IMR-90 (cell line): ENCODE measurements at regions of chr18 and their contacts with region 1.

Region 1: DNA sequence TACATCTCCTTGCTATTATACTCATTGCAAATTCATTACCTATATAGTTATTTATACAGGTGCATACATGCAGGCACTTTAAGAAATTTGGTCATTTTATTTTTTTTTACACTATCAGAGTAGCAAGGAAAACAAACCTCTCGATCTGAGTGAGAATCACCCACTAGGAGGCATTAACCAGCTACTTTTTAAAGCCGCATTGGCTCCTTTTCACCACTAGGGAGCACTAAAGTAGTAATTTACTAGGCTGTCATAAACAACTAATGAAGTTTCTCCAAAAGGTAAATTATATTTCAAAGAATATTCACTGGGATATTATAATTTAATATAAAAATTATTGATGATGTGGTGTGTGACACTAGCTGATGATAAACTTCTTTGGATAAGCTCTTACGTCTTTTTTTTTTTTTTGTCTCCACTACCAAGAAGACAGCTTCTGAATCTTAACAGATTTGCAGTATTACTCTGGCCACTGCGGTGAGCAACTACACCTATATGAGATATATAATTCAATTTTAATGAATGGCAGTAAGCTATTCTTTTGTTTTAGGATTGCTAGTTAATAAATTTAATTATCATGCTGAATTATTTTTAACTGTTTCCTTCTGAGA is 101.9 kb downstream of the NOL4 start:
- DNase-seq: peak; percentile 53
- ATAC-seq: peak; percentile 69; the same call in 1 of the 2 replicates
- H3K4me3 ChIP-seq: no peak overlapping the region
- H3K27ac ChIP-seq: no peak overlapping the region
- H3K4me1 ChIP-seq: no peaks in the 10 kb centered on the region
- H3K27me3 ChIP-seq: no peaks in the 10 kb centered on the region
- CTCF ChIP-seq: peak; percentile 98
- POLR2A ChIP-seq: no peak
- RAD21 ChIP-seq: peak; percentile 62

Region 2: GRCh38 chr18:34108206-34108605 is 14.6 kb before region 1 on chr18:
- CTCF ChIA-PET with region 1: interaction called, 12 read pairs
- POLR2A ChIA-PET with region 1: no interaction called
- dilution Hi-C with region 1: no loop called
- in situ Hi-C with region 1: no loop called
- intact Hi-C with region 1: no loop called
- DNase-seq: no peak
- ATAC-seq: no peak
- H3K4me3 ChIP-seq: no peak overlapping the region
- H3K27ac ChIP-seq: no peak overlapping the region
- H3K4me1 ChIP-seq: no peaks in the 10 kb centered on the region
- H3K27me3 ChIP-seq: no peaks in the 10 kb centered on the region
- CTCF ChIP-seq: no peak
- POLR2A ChIP-seq: no peak
- RAD21 ChIP-seq: no peak

Region 3: GRCh38 chr18:34322365-34323289 is 199.8 kb after region 1 on chr18:
- CTCF ChIA-PET with region 1: interaction called, 22 read pairs
- POLR2A ChIA-PET with region 1: no interaction called
- dilution Hi-C with region 1: no loop called
- in situ Hi-C with region 1: loop called (anchors 10 kb)
- intact Hi-C with region 1: loop called (anchors 1 kb)
- DNase-seq: peak; percentile 57
- ATAC-seq: 0 out of 2 replicates have a peak, but pooled peaks have one; percentile 46
- H3K4me3 ChIP-seq: no peak overlapping the region
- H3K27ac ChIP-seq: no peak overlapping the region
- H3K4me1 ChIP-seq: no peaks in the 10 kb centered on the region
- H3K27me3 ChIP-seq: no peaks in the 10 kb centered on the region
- CTCF ChIP-seq: peak; percentile 66
- POLR2A ChIP-seq: no peak
- RAD21 ChIP-seq: peak; percentile 67

Region 4: DNA sequence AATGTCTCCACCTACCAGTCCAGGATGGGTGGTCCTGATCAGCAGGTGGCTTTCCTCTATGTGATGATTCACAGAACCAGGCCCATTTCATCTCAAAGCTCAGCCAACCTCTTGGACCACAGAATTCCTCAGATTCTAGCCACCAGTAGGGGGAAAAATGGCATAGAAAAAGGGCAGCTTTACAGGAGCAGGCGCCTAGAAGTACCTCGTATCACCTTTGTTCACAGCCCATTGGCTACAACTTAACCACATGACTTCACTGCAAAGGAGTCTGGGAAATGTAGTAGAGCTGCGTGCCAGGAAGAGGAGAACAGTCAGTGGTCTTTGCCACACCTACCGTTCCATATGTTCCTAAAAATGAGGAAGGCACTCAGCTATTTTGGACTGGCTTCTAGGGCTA is 524.4 kb after region 1 on chr18:
- CTCF ChIA-PET with region 1: no interaction called
- POLR2A ChIA-PET with region 1: no interaction called
- dilution Hi-C with region 1: no loop called
- in situ Hi-C with region 1: no loop called
- intact Hi-C with region 1: loop called (anchors 5 kb)
- DNase-seq: no peak
- ATAC-seq: no peak
- H3K4me3 ChIP-seq: no peak overlapping the region
- H3K27ac ChIP-seq: no peak overlapping the region
- H3K4me1 ChIP-seq: peaks cover 4% of the 10 kb centered on the region; the same call in 1 of the 2 replicates
- H3K27me3 ChIP-seq: no peaks in the 10 kb centered on the region
- CTCF ChIP-seq: no peak
- POLR2A ChIP-seq: no peak
- RAD21 ChIP-seq: no peak

Region 5: GRCh38 chr18:34787931-34788532 is 665.2 kb after region 1 on chr18:
- CTCF ChIA-PET with region 1: interaction called, 4 read pairs
- POLR2A ChIA-PET with region 1: no interaction called
- dilution Hi-C with region 1: no loop called
- in situ Hi-C with region 1: loop called (anchors 25 kb)
- intact Hi-C with region 1: loop called (anchors 2 kb)
- DNase-seq: peak; percentile 69
- ATAC-seq: peak; percentile 64; the same call in 1 of the 2 replicates
- H3K4me3 ChIP-seq: no peak overlapping the region
- H3K27ac ChIP-seq: no peak overlapping the region
- H3K4me1 ChIP-seq: peaks cover 7% of the 10 kb centered on the region; the same call in 1 of the 2 replicates
- H3K27me3 ChIP-seq: no peaks in the 10 kb centered on the region
- CTCF ChIP-seq: peak; percentile 74
- POLR2A ChIP-seq: no peak
- RAD21 ChIP-seq: peak; percentile 90

Region 6: GRCh38 chr18:34821749-34822148 is 698.9 kb after region 1 on chr18:
- CTCF ChIA-PET with region 1: no interaction called
- POLR2A ChIA-PET with region 1: no interaction called
- dilution Hi-C with region 1: no loop called
- in situ Hi-C with region 1: no loop called
- intact Hi-C with region 1: no loop called
- DNase-seq: peak; percentile 70
- ATAC-seq: peak; percentile 96
- H3K4me3 ChIP-seq: no peak overlapping the region
- H3K27ac ChIP-seq: peak overlapping the region; percentile 6; the same call in 1 of the 2 replicates
- H3K4me1 ChIP-seq: peaks cover 8% of the 10 kb centered on the region
- H3K27me3 ChIP-seq: no peaks in the 10 kb centered on the region
- CTCF ChIP-seq: no peak
- POLR2A ChIP-seq: no peak
- RAD21 ChIP-seq: no peak